Mammary epithelial cell (primary cell): ENCODE measurements at regions of chr17 and their contacts with region 1.

Region 1: GRCh38 chr17:61574542-61575174 is 16.4 kb downstream of the NACA2 start:
- DNase-seq: peak; percentile 57
- H3K4me3 ChIP-seq: no peak overlapping the region
- H3K27ac ChIP-seq: no peak overlapping the region
- H3K4me1 ChIP-seq: no peaks in the 10 kb centered on the region
- H3K27me3 ChIP-seq: peaks cover 2% of the 10 kb centered on the region
- CTCF ChIP-seq: peak; percentile 29 to 45

Region 2: DNA sequence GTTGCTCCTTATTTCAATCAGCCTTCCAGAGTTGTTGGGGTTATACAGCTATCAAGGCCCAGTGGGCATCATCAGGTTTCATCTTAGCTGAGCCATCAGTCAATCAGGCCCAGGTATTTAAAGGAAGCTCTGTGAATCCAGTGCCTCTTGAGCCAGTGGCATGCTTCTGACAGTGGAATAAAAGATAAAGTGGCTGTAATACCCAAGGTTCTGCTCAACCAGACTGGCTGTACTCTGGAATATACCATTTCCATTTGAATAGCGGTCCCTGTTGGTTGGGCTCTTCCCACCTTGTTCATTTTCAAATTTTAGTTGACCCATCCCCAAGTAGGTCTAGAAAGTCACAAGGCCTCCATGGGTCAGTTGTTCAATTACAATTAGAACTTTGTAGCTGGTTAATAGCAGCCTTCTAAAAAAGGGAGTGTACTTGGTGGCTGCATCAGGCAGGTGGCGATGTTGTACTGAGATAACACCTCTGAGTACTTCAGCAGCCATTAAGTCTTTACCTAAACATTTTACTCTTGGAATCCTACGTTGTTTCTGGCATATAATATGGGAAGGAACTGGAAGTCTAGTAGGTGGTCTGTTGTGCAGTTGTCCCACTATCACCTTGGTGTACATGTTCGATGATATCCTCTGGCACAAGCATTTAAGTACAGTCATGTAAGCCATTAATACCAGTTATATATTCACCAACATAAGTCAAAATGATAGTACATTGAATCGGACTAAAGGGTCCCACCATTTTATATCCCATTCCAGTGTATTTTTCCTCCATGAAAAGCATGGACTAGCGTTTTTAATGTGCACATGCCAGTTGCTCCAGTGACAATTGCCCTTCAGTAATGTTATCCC is 602.9 kb before region 1 on chr17:
- CTCF ChIA-PET with region 1: no interaction called
- dilution Hi-C with region 1: no loop called
- in situ Hi-C with region 1: loop called in 1 of 2 experiments (anchors 25 kb)
- intact Hi-C with region 1: loop called (anchors 10 kb)
- DNase-seq: peak; percentile 28
- H3K4me3 ChIP-seq: no peak overlapping the region
- H3K27ac ChIP-seq: no peak overlapping the region
- H3K4me1 ChIP-seq: no peaks in the 10 kb centered on the region
- H3K27me3 ChIP-seq: no peaks in the 10 kb centered on the region
- CTCF ChIP-seq: peak; percentile 57 to 69

Region 3: GRCh38 chr17:61002316-61002736 is 572.3 kb before region 1 on chr17:
- CTCF ChIA-PET with region 1: no interaction called
- dilution Hi-C with region 1: no loop called
- in situ Hi-C with region 1: loop called (anchors 25 kb)
- intact Hi-C with region 1: no loop called
- DNase-seq: peak; percentile 12
- H3K4me3 ChIP-seq: no peak overlapping the region
- H3K27ac ChIP-seq: no peak overlapping the region
- H3K4me1 ChIP-seq: no peaks in the 10 kb centered on the region
- H3K27me3 ChIP-seq: no peaks in the 10 kb centered on the region
- CTCF ChIP-seq: peak; percentile 32 to 52

Region 4: GRCh38 chr17:61536436-61536955 is 38.2 kb before region 1 on chr17:
- CTCF ChIA-PET with region 1: no interaction called
- dilution Hi-C with region 1: no loop called
- in situ Hi-C with region 1: no loop called
- intact Hi-C with region 1: no loop called
- DNase-seq: no peak
- H3K4me3 ChIP-seq: no peak overlapping the region
- H3K27ac ChIP-seq: no peak overlapping the region
- H3K4me1 ChIP-seq: no peaks in the 10 kb centered on the region
- H3K27me3 ChIP-seq: no peaks in the 10 kb centered on the region
- CTCF ChIP-seq: no peak

Region 5: GRCh38 chr17:61551255-61551742 is 23.4 kb before region 1 on chr17:
- CTCF ChIA-PET with region 1: no interaction called
- dilution Hi-C with region 1: no loop called
- in situ Hi-C with region 1: no loop called
- intact Hi-C with region 1: loop called (anchors 1 kb)
- DNase-seq: no peak
- H3K4me3 ChIP-seq: no peak overlapping the region
- H3K27ac ChIP-seq: no peak overlapping the region
- H3K4me1 ChIP-seq: no peaks in the 10 kb centered on the region
- H3K27me3 ChIP-seq: peaks cover 8% of the 10 kb centered on the region
- CTCF ChIP-seq: peak; percentile 67 to 72